Mucosa of descending colon (tissue), 3 donors: ENCODE measurements at regions of chr2 and their contacts with region 1.

Region 1: DNA sequence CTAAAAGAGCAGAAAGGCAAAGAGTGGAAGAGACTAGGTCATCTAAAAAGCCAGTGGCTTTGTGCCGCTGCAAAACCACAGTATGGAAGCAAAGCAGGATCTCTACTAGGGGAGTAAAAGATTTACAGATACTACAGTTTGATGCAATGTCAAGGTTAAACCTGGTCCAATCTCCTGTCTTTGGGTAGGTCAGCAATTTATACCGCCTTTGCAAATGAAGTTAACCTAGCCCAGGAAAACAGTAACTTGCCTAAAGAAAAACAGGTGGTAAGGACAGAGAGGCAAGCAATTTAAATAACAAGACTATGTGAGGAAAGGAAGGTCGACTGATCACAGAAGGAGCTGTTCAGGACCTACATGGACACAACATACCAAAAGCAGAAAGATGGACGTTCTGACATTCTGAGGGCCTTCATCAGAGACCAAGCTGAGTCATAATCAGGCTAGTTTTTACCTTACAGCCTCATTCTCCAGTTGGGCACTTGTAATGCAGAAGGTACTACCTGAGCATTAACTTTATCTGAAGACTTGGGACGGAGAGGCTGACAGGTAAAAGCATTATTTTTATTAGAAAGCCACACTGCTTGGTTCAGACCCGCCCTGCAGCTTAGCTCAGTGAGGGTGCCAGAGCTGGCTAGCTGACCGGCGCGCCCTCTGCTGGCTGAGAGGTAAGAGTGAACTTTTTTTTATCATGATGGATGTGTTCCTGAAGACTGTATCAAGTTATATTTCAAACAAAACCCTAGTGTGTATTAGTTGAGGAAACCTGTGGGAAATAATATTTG is 15.9 kb downstream of the CDKL4 start:
- DNase-seq: peak; percentile 77 to 83 (median 83)
- ATAC-seq: peak; percentile 96
- H3K4me3 ChIP-seq: no peak overlapping the region
- H3K4me1 ChIP-seq: no peaks in the 10 kb centered on the region
- CTCF ChIP-seq: peak; percentile 68

Region 2: DNA sequence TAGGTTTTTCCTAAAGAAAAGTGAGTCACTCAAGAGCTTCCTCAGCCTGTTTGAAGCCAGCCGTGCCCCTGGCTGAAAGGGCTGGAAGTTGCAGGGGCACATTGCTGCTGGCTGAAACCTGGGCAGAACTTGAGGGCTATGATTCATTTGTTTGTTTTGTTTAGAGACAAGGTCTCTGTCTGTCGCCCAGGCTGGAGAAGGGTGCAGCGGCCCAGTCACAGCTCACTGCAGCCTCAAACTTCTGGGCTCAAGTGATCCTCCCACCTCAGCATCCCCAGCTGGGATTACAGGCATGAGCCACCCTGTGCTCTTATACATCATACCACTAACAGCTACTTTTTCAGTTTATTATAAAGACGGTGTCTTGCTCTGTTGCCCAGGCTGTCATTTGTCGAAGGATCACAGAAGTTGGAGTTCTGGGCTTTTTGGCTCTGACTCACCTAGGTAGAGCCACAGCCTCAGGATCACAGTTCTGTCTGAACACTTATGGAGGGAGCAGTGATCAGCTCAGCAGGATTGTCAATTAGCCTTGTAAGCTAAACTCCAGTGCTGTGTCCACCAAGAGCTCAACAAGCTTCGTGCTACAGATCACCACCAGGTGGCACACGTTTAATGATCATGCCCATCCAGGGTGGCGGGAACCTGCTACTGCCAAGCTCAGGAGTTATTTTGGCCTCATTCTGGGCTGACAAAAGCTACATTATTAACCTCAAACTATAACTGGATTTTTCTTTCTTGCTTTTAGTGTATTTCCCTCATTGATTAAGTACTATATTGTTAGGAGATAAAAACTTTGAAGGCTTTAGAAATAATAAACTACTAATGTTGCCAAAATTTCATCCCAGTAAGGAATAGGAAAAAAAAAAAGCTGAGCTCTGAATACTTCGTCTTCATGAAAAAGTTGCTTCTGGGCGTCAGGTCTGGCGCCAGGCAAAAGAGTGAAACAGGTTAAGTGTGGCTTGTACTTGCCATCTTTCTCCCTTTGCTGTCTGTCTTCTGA is 280.3 kb before region 1 on chr2:
- intact Hi-C with region 1: loop called in 1 of 2 experiments (anchors 5 kb)
- DNase-seq: peak in 2 of 3 donors; percentile 69 to 90
- ATAC-seq: peak; percentile 89
- H3K4me3 ChIP-seq: no peak overlapping the region
- H3K4me1 ChIP-seq: no peaks in the 10 kb centered on the region
- CTCF ChIP-seq: peak; percentile 61

Region 3: DNA sequence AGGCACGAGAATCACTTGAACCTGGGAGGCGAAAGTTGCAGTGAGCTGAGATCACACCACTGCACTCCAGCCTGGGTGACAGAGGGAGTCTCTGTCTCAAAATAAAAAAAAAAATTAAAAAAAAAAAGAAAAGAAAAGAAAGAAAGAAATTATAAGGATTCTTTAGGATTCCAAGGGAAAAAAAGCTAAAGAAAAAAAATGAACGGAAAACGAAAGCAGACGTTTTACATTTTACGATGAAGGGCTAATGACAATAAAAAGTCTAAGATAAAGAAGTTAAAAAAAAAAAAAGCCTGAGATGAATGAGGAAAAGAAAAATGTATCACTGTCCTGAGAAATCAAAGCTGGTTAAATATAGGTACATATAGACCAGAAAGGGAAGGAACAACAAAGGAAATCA is 165.5 kb before region 1 on chr2:
- intact Hi-C with region 1: loop called (anchors 5 kb)
- DNase-seq: no peak
- ATAC-seq: no peak
- H3K4me3 ChIP-seq: no peak overlapping the region
- H3K4me1 ChIP-seq: no peaks in the 10 kb centered on the region
- CTCF ChIP-seq: no peak

Region 4: GRCh38 chr2:39837856-39838453 is 610.1 kb after region 1 on chr2:
- intact Hi-C with region 1: no loop called
- DNase-seq: peak in 1 of 3 donors; percentile 42
- ATAC-seq: peak; percentile 67
- H3K4me3 ChIP-seq: no peak overlapping the region
- H3K4me1 ChIP-seq: no peaks in the 10 kb centered on the region
- CTCF ChIP-seq: peak; percentile 45